ENCODE measurements at regions of chr18 and their contacts with region 1.

Region 1: DNA sequence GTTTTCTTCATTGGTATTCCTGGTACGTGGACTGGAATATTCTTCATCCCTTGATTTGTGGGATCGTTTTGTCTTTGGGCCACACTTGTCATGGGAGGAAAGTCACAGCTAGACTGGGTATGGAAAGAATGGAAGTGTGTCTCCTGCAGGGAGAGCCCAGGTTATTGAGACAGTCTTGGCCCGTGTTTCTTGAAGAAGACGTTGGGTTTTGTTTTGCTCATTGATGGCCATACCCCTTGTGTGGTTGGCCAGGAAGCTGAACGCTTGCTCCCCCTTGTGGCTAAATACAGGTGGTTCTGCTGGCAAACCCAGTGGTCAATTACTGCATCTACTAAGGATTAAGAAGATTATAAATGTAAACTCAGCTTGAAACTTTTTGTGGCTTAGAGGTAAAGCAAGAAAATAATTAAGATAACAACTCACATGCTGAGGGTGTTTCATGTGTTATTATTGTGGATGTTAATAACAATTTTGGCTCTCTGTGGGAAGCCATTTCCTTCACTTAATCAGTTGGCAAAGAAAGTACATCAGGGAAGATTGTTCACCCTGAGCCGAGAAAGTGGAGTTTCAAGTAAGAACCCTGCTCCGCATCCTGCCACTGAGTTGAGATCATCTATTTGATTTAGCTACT is 91.8 kb downstream of the NEDD4L start:
- DNase-seq: peak; percentile 69
- H3K4me3 ChIP-seq: no peak overlapping the region
- H3K27ac ChIP-seq: no peak overlapping the region
- H3K4me1 ChIP-seq: peaks cover 2% of the 10 kb centered on the region
- H3K27me3 ChIP-seq: no peaks in the 10 kb centered on the region
- CTCF ChIP-seq: peak; percentile 85 to 91
- POLR2A ChIP-seq: no peak

Region 2: DNA sequence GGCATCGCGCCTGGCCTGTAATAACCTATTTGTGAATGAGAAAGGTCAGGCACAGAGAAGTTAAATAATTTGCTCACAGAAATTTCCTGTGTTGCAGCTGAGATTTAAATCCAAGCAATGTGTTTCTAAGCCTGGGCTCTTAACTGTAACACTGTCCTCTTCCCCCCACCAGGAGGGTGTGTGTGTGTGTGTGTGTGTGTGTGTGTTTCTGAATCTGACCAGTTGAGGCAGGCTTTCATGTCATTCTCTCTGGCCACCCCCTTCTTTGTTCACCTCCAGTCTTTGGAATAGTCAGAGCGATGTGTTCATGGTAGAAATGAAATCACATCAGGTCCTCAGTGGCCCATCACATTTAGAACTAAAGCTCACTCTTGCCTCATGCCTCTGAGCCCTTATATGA is 10.6 kb before region 1 on chr18:
- CTCF ChIA-PET with region 1: interaction called, 27 read pairs
- POLR2A ChIA-PET with region 1: no interaction called
- dilution Hi-C with region 1: no loop called
- intact Hi-C with region 1: no loop called
- DNase-seq: no peak
- H3K4me3 ChIP-seq: no peak overlapping the region
- H3K27ac ChIP-seq: no peak overlapping the region
- H3K4me1 ChIP-seq: no peaks in the 10 kb centered on the region
- H3K27me3 ChIP-seq: no peaks in the 10 kb centered on the region
- CTCF ChIP-seq: no peak
- POLR2A ChIP-seq: no peak

Region 3: GRCh38 chr18:58180738-58181353 is 45.0 kb after region 1 on chr18:
- CTCF ChIA-PET with region 1: interaction called, 8 read pairs
- POLR2A ChIA-PET with region 1: no interaction called
- dilution Hi-C with region 1: no loop called
- intact Hi-C with region 1: loop called (anchors 2 kb)
- DNase-seq: peak; percentile 67
- H3K4me3 ChIP-seq: no peak overlapping the region
- H3K27ac ChIP-seq: no peak overlapping the region
- H3K4me1 ChIP-seq: peaks cover 24% of the 10 kb centered on the region
- H3K27me3 ChIP-seq: no peaks in the 10 kb centered on the region
- CTCF ChIP-seq: peak; percentile 75 to 77
- POLR2A ChIP-seq: no peak